ENCODE measurements at regions of chr11 and their contacts with region 1.

Region 1: GRCh38 chr11:2400069-2400760 is at the start of gene TSSC4:
- DNase-seq: peak; percentile 96
- H3K4me3 ChIP-seq: peak within 1 kb of the TSS; percentile 89
- H3K27ac ChIP-seq: peak within 1 kb of the TSS; percentile 62
- H3K4me1 ChIP-seq: no peaks in the 10 kb centered on the region
- H3K27me3 ChIP-seq: no peaks in the 10 kb centered on the region
- CTCF ChIP-seq: peak; percentile 80
- total RNA-seq, gene TSSC4: 35.6 and 49.3 TPM in 2 replicates

Region 2: DNA sequence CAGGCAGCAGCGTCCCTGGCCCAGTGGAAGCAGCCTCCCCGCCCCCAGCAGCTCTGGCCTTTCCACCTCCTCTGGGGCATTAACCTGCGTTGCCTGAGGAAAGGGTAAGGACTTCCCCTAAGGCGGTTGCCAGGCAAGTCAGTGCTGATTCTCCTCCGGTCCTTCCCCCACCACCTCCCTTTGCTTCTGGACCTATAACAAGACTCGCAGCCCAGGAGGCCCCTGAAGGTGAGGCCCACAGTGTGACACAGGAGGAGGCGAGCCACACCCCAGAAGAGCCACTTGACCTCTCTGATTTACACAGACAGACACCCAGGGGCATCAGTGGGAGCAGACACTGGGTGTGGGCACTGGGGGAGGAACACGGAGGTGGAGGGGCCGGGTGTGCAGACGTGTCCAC is 165.3 kb before region 1 on chr11:
- CTCF ChIA-PET with region 1: no interaction called
- POLR2A ChIA-PET with region 1: no interaction called
- intact Hi-C with region 1: no loop called
- DNase-seq: no peak
- H3K4me3 ChIP-seq: no peak overlapping the region
- H3K27ac ChIP-seq: no peak overlapping the region
- H3K4me1 ChIP-seq: no peaks in the 10 kb centered on the region
- H3K27me3 ChIP-seq: no peaks in the 10 kb centered on the region
- CTCF ChIP-seq: no peak

Region 3: GRCh38 chr11:2305140-2305840 is 94.9 kb before region 1 on chr11:
- CTCF ChIA-PET with region 1: no interaction called
- POLR2A ChIA-PET with region 1: no interaction called
- intact Hi-C with region 1: loop called (anchors 1 kb)
- DNase-seq: peak in 1 of 2 experiments; percentile 64
- H3K4me3 ChIP-seq: no peak overlapping the region
- H3K27ac ChIP-seq: no peak overlapping the region
- H3K4me1 ChIP-seq: no peaks in the 10 kb centered on the region
- H3K27me3 ChIP-seq: no peaks in the 10 kb centered on the region
- CTCF ChIP-seq: peak; percentile 83

Region 4: GRCh38 chr11:2325719-2326118 is 74.5 kb before region 1 on chr11:
- CTCF ChIA-PET with region 1: no interaction called
- POLR2A ChIA-PET with region 1: no interaction called
- intact Hi-C with region 1: no loop called
- DNase-seq: peak; percentile 50 to 58
- H3K4me3 ChIP-seq: no peak overlapping the region
- H3K27ac ChIP-seq: no peak overlapping the region; the same call in 1 of the 2 replicates
- H3K4me1 ChIP-seq: no peaks in the 10 kb centered on the region
- H3K27me3 ChIP-seq: no peaks in the 10 kb centered on the region
- CTCF ChIP-seq: no peak

Region 5: DNA sequence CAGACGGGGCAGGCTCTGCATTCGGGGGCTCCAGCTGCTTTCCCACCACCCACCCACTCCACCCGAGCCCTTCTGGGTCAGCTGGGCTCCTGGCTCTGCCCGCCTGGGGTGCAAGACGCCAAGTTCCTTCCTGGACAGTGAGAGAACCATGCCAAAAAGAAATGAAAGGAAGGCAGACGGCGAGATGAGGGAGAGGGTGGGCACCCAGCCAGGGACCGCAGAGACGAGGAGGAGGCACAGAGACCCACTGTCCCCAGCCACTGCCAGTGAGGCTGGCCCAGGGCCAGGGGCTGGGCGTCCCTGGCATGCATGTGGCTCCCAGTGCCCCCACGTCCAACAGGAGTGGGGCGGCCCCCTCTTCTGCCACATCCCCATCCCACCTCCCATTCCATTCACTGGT is 34.0 kb before region 1 on chr11:
- CTCF ChIA-PET with region 1: no interaction called
- POLR2A ChIA-PET with region 1: no interaction called
- intact Hi-C with region 1: no loop called
- DNase-seq: no peak
- H3K4me3 ChIP-seq: no peak overlapping the region
- H3K27ac ChIP-seq: no peak overlapping the region
- H3K4me1 ChIP-seq: no peaks in the 10 kb centered on the region
- H3K27me3 ChIP-seq: peaks cover 3% of the 10 kb centered on the region; the same call in 1 of the 2 replicates
- CTCF ChIP-seq: no peak

Measured in PC-9 (cell line).